ENCODE measurements at regions of chr5 and their contacts with region 1.

Region 1: DNA sequence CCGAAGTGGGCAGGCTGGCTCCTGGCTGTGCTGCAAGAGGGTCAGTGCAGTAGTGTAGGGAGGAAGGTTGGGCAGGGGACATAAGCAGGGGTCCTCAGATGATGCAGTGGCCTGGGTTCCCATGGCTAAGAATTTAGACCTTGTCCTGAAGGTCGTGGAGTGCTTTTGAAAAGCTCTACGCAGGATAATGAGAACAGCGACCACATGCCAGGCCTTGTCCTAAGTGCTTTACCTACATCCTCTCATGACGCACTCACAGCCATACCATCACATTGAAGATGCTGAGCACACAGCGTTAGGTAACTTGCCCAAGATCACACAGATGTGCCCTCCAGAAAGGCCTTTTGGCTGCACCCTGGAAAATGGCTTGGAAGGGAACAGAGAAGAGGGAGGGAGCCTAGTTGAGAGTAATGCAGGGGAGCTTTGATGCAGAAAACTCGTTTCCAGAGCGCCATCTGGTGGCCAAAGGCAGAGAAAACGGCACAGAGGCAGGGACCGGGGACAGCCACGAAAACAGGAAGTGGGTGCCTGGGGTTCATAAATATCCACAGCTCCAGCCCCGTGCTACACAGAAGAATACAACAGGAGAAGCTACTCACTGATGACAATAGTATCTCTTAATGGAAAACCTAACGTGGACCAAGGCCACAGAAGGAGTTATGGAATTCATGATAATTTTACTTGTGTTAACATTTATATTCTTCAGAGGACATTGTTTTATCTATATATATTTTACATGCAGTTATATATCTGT is 2.6 kb upstream of the PCDH12 start:
- DNase-seq: peak; percentile 84 to 96 (median 91)
- ATAC-seq: peak; percentile 98
- H3K4me3 ChIP-seq: no peak overlapping the region
- H3K4me3 Mint-ChIP-seq: peak overlapping the region; percentile 40
- H3K27ac ChIP-seq: peak overlapping the region in 1 of 2 donors; percentile 4
- H3K27ac Mint-ChIP-seq: peak overlapping the region; percentile 86
- H3K4me1 ChIP-seq: peaks cover 48% of the 10 kb centered on the region
- H3K4me1 Mint-ChIP-seq: peaks cover 51% of the 10 kb centered on the region
- H3K27me3 ChIP-seq: no peaks in the 10 kb centered on the region
- H3K27me3 Mint-ChIP-seq: no peaks in the 10 kb centered on the region
- CTCF ChIP-seq: peak; percentile 75

Region 2: GRCh38 chr5:141650851-141651727 is 309.5 kb before region 1 on chr5 and contains the start of gene FCHSD1:
- CTCF ChIA-PET with region 1: no interaction called
- POLR2A ChIA-PET with region 1: interaction called, 10 read pairs
- intact Hi-C with region 1: no loop called
- DNase-seq: peak; percentile 62 to 88 (median 76)
- ATAC-seq: peak; percentile 91
- H3K4me3 ChIP-seq: peak within 1 kb of the TSS; percentile 86
- H3K4me3 Mint-ChIP-seq: peak within 1 kb of the TSS; percentile 86
- H3K27ac ChIP-seq: peak within 1 kb of the TSS; percentile 26 to 83
- H3K27ac Mint-ChIP-seq: peak within 1 kb of the TSS; percentile 54
- H3K4me1 ChIP-seq: peaks cover 28% of the 10 kb centered on the region
- H3K4me1 Mint-ChIP-seq: peaks cover 38% of the 10 kb centered on the region
- H3K27me3 ChIP-seq: no peaks in the 10 kb centered on the region
- H3K27me3 Mint-ChIP-seq: peaks cover 3% of the 10 kb centered on the region
- CTCF ChIP-seq: no peak
- total RNA-seq, gene FCHSD1: 79.8 to 86.8 TPM

Region 3: DNA sequence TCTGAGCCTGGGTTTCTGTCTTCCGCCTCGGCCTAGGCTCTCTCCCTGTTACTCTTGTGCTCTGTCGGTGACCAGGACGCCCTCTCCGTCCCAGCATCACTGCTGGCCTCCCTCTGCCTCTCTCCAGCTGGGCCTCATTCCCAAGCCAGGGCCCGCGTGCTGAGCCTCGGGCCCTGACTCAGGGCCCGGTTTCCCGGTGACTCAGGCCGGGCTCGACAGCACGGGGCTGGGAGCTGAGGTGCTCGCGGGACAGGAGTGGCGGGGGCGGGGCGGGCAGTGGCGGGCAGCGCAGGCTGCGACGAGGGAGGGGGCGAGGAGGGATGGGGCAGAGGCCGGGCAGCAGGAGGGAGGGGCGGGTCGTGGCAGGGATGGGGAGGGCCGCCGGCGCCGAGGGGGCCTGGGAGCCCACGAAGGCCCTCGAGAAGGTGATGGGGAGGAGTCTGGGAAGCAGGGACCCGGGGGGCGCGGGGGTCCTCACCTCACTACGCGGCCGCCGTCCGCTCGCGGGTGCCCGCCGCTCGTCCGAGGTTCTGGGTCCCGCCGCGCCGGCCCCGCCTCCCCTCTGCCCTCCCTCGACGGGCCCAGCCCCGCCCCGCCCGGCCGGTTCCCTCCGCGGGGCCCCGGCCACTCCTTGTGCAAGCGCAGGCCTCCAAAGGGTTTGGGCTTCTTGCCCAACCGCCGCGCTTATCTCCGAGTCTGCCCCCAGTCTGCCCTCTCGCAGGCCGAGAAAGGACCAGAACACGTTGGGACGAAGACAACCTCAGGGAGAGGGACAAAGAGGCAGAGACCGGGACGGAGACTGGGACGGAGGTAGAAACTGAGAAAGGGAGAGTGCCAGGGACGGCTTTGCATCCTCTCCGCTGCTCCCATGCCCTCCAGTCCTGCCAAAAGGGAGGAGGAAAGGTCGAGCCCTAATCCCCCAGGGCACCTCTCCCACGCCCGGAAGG is 278.7 kb before region 1 on chr5 and contains the start of gene ARAP3:
- CTCF ChIA-PET with region 1: interaction called, 5 read pairs
- POLR2A ChIA-PET with region 1: interaction called, 15 read pairs
- intact Hi-C with region 1: no loop called
- DNase-seq: peak in 10 of 14 experiments; percentile 22 to 66 (median 38)
- ATAC-seq: peak; percentile 66
- H3K4me3 ChIP-seq: peak within 1 kb of the TSS; percentile 51
- H3K4me3 Mint-ChIP-seq: peak within 1 kb of the TSS; percentile 62
- H3K27ac ChIP-seq: no peak within 1 kb of the TSS
- H3K27ac Mint-ChIP-seq: no peak within 1 kb of the TSS
- H3K4me1 ChIP-seq: peaks cover 37% of the 10 kb centered on the region
- H3K4me1 Mint-ChIP-seq: peaks cover 29% of the 10 kb centered on the region
- H3K27me3 ChIP-seq: no peaks in the 10 kb centered on the region
- H3K27me3 Mint-ChIP-seq: no peaks in the 10 kb centered on the region
- CTCF ChIP-seq: no peak
- total RNA-seq, gene ARAP3: 0.30 to 0.31 TPM

Region 4: DNA sequence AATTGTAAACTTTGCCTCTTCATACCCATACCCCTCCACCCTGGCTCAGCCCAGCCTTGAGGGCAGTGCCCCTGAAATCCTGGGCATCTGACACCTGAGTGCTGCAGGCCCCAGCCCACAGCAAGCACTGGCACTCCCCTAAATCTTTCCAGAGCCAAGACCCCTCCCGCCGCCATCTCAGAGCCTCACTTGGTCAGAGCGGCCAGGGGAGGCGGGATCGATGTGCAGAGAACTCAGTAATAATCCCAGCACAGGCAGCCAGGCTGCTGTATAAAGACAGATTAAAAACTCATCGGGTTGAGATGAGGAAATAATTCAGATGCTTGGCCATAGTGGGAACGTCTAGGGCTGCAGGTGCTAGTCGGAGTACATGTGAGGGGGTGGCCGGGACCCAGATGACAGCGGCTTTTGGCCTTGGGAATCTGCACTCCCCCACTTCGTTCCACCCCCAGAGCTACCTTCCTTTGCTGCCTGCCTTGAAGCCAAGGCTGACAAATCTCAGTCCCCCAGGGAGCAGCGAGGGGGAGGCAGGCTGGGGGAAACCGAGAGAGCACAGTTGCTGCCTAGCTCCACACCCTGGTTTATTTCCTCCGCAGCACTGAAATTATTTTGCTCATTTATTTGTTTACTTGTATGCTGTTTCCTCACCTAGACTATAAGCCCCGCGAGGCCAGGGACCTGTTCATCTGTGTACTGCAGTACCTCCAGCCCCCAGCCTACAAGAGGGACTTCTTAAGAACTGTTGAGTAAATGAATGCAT is 259.1 kb before region 1 on chr5:
- CTCF ChIA-PET with region 1: interaction called, 78 read pairs
- POLR2A ChIA-PET with region 1: interaction called, 19 read pairs
- intact Hi-C with region 1: loop called in 1 of 2 experiments (anchors 2 kb)
- DNase-seq: peak in 1 of 14 experiments; percentile 15
- ATAC-seq: peak; percentile 35
- H3K4me3 ChIP-seq: peak overlapping the region; percentile 73
- H3K4me3 Mint-ChIP-seq: no peak overlapping the region
- H3K27ac ChIP-seq: no peak overlapping the region
- H3K27ac Mint-ChIP-seq: no peak overlapping the region
- H3K4me1 ChIP-seq: peaks cover 23% of the 10 kb centered on the region
- H3K4me1 Mint-ChIP-seq: peaks cover 19% of the 10 kb centered on the region
- H3K27me3 ChIP-seq: peaks cover 32 to 33% of the 10 kb centered on the region in 2 experiments
- H3K27me3 Mint-ChIP-seq: peaks cover 51% of the 10 kb centered on the region
- CTCF ChIP-seq: no peak

Region 5: DNA sequence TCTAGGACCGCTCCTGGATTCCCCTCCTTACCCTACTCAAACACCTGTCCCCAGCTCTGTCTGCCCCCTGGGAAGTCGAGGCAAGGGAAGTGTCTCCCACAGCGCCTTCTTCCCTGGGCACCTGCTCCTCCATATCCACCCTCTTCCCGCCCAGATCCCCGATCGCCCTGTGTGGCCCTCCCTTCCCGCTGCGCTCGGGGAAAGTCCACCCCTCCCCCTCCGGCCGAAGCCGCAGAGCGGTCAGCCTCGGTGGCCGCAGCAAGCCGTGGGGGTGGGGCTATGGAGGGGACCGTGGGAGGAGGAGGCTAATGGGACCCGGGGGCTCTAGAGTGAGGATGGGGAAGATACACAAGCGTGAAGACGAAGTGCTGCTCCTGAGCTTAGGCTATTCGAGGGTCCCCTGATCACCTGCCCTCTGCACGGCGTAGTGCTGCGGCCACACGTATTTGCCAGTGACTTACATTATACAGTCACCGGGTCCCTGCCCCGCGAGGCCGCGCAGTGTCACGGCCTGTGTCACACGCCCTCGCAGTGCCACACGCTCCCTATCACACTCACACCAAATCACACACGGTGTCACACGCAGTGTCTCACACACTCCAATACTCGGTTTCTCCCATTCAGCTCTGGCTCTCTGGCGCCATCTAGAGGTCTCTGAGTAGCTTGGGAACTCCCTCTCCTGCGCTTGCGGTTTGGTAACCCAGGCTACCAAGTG is 81.8 kb before region 1 on chr5:
- CTCF ChIA-PET with region 1: interaction called, 21 read pairs
- POLR2A ChIA-PET with region 1: interaction called, 33 read pairs
- intact Hi-C with region 1: loop called (anchors 1 to 2 kb)
- DNase-seq: peak; percentile 80 to 97 (median 86)
- ATAC-seq: peak; percentile 85
- H3K4me3 ChIP-seq: peak overlapping the region; percentile 47
- H3K4me3 Mint-ChIP-seq: peak overlapping the region; percentile 81
- H3K27ac ChIP-seq: no peak overlapping the region
- H3K27ac Mint-ChIP-seq: no peak overlapping the region
- H3K4me1 ChIP-seq: peaks cover 44% of the 10 kb centered on the region
- H3K4me1 Mint-ChIP-seq: peaks cover 33% of the 10 kb centered on the region
- H3K27me3 ChIP-seq: peaks cover 84 to 85% of the 10 kb centered on the region in 2 experiments
- H3K27me3 Mint-ChIP-seq: peaks cover 85% of the 10 kb centered on the region
- CTCF ChIP-seq: peak; percentile 97

Region 6: DNA sequence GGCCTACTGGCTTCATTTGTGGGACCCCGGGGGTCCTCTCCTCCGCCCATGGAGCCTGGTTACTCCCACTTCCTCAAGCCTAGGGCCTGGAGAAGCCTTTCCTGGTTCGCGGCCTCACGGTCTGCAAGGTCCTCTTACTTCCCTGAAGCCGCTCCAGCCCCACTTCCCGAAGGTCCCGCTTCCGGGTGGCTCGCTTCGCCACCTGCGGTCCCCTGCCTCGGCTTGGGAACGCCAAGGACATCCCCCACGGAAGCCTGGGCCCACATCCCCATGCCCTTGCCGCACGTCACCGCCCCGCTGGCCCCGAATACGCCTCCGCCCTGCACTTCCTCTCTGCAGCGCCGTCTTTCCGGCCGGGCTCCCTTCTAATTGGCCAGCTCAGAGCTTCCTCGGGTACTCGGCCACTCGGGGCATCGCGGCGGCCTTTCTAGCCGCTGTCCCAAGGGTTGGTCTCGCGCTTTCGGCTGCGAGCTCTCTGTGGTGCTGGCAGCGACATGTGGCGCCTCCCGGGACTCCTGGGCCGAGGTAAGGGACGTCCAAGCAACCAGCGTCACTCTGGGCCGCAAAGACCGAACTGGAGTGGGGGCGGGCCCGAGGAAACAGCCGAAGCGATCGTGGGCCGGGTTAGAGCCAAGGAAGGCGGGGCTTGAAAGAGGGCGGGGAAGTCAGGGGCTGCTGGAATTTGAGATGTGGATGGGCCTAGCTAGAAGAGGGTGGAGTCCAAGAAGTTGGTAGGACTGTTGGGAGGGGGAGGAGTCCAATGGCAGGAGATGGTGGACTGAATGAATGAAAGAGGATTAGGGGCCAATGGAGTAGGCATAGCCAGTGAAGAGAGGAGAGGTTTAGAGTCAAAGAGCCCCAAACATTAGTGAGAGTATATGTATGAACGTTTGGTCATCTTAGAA is 36.9 kb before region 1 on chr5 and contains the start of gene DELE1:
- CTCF ChIA-PET with region 1: interaction called, 20 read pairs
- POLR2A ChIA-PET with region 1: interaction called, 48 read pairs
- intact Hi-C with region 1: loop called in 1 of 2 experiments (anchors 2 kb)
- DNase-seq: peak; percentile 82 to 95 (median 87)
- ATAC-seq: peak; percentile 94
- H3K4me3 ChIP-seq: peak within 1 kb of the TSS; percentile 75
- H3K4me3 Mint-ChIP-seq: peak within 1 kb of the TSS; percentile 96
- H3K27ac ChIP-seq: peak within 1 kb of the TSS; percentile 94 to 96
- H3K27ac Mint-ChIP-seq: peak within 1 kb of the TSS; percentile 99
- H3K4me1 ChIP-seq: peaks cover 30% of the 10 kb centered on the region
- H3K4me1 Mint-ChIP-seq: peaks cover 45% of the 10 kb centered on the region
- H3K27me3 ChIP-seq: no peaks in the 10 kb centered on the region
- H3K27me3 Mint-ChIP-seq: no peaks in the 10 kb centered on the region
- CTCF ChIP-seq: no peak
- total RNA-seq, gene DELE1: 60.0 to 61.1 TPM

Region 7: DNA sequence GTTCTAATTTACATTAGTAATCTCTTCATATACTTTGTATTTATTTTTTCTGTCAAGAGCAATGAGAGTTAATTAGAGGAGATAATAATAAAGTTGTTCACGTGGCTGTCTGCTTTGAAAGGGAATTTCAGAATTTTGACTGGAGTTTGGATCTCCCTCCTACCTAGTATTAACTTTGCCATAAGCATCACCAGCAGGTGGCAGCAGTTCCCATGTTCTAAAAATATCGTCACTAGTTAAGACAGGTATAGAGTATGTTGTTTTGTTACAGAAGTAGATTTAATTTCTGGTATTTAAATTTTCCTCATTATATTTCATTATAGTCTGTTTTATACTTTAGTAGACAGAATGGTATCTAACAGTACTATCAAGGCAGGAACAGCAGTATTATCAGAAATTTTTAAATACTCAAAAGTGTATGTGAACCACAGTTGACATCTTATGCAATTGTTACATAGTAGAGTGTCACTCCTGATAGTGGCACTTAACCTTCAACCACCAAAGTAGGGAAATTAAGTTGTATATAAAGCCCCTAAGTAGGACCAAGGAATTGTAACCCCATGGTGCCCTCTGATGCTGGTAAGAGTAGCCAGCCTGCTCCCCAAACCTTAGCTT is 31.8 kb after region 1 on chr5:
- CTCF ChIA-PET with region 1: interaction called, 14 read pairs
- POLR2A ChIA-PET with region 1: interaction called, 4 read pairs
- intact Hi-C with region 1: no loop called
- DNase-seq: peak; percentile 61 to 91 (median 78)
- ATAC-seq: peak; percentile 88
- H3K4me3 ChIP-seq: no peak overlapping the region
- H3K4me3 Mint-ChIP-seq: no peak overlapping the region
- H3K27ac ChIP-seq: no peak overlapping the region
- H3K27ac Mint-ChIP-seq: no peak overlapping the region
- H3K4me1 ChIP-seq: no peaks in the 10 kb centered on the region
- H3K4me1 Mint-ChIP-seq: peaks cover 6% of the 10 kb centered on the region
- H3K27me3 ChIP-seq: no peaks in the 10 kb centered on the region
- H3K27me3 Mint-ChIP-seq: no peaks in the 10 kb centered on the region
- CTCF ChIP-seq: peak; percentile 93